ENCODE measurements at regions of chr9 and their contacts with region 1.

Region 1: DNA sequence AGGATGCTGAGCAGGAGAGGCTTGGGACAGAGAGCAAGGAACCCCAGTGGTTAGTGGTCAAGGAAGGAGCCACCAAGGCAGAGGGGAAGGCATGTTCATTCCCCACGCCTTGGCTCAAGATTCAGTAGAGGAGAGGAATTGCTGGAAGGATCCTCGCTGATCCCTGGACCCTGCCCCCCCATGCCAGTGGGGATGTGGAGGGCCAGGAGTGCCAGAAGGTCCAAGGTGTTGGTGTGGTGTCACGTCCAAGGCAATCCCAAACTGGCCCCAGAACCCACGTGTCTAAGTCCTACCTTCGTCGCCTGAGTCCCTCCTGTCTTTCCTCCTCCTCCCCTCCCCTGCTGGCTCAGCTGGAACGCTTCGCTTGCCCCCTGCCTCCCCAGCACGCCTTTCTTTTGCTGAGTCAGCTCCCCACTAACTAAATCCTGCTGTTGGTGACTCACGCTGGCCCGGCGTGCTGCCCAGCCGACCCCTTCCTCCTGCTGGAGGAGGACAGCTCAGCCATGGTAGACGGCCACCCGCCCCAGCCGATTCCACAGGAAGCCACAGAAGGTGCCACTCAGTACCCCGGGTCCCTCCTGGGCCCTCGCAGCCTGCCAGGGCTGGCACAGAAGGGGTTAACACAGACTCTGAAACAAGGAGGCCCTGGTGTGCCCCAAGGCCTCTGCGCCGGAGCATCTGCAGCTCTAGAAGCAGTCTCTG is 37.6 kb upstream of the ORM1 start:
- DNase-seq: peak in 3 of 6 donors; percentile 16 to 61 (median 53)
- ATAC-seq: peak in 2 of 4 donors; percentile 28 to 29
- H3K4me3 ChIP-seq: no peak overlapping the region
- H3K27ac ChIP-seq: no peak overlapping the region
- H3K4me1 ChIP-seq: no peaks in the 10 kb centered on the region
- H3K27me3 ChIP-seq: no peaks in the 10 kb centered on the region
- CTCF ChIP-seq: no peak

Region 2: GRCh38 chr9:114108016-114108833 is 177.1 kb before region 1 on chr9:
- intact Hi-C with region 1: loop called in 2 of 3 experiments (anchors 5 kb)
- DNase-seq: peak; percentile 69 to 94 (median 88)
- ATAC-seq: peak; percentile 99 to 100 (median 100)
- H3K4me3 ChIP-seq: no peak overlapping the region
- H3K27ac ChIP-seq: no peak overlapping the region
- H3K4me1 ChIP-seq: peaks cover 0 to 3% (median 0%) of the 10 kb centered on the region in 3 donors
- H3K27me3 ChIP-seq: no peaks in the 10 kb centered on the region
- CTCF ChIP-seq: peak; percentile 92 to 99 (median 94)

Measured in pancreas (tissue), 10 donors.